ENCODE measurements at regions of chr9 and their contacts with region 1.

Region 1: GRCh38 chr9:17116400-17116837 is 18.4 kb upstream of the CNTLN start:
- DNase-seq: no peak
- H3K4me3 ChIP-seq: no peak overlapping the region
- H3K27ac ChIP-seq: no peak overlapping the region
- H3K4me1 ChIP-seq: no peaks in the 10 kb centered on the region
- H3K27me3 ChIP-seq: no peaks in the 10 kb centered on the region
- CTCF ChIP-seq: peak in 3 of 4 experiments; percentile 29 to 56 (median 47)
- POLR2A ChIP-seq: no peak

Region 2: DNA sequence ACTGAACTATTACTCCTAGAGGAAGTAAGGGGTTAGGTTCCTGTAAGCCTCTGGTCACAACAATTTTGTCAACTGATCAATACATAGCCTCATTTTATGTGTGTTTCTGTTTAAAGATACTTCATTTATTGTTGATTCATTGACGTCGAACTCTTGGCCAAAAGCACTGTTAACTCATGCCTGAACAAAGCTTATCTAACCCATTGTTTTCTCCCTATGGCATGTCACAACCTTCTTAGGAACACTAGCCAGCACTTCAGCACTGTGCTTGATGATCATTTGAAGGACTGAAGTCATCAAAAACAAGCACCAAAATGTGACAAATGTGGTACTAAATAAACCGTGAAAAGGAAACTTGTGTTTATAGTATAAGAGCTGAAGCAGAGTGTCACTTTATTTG is 31.9 kb after region 1 on chr9:
- intact Hi-C with region 1: no loop called
- DNase-seq: no peak
- H3K4me3 ChIP-seq: no peak overlapping the region
- H3K27ac ChIP-seq: no peak overlapping the region
- H3K4me1 ChIP-seq: no peaks in the 10 kb centered on the region
- H3K27me3 ChIP-seq: no peaks in the 10 kb centered on the region
- CTCF ChIP-seq: no peak
- POLR2A ChIP-seq: no peak

Region 3: GRCh38 chr9:17462869-17463464 is 346.5 kb after region 1 on chr9:
- intact Hi-C with region 1: loop called (anchors 5 kb)
- DNase-seq: peak; percentile 35
- H3K4me3 ChIP-seq: no peak overlapping the region
- H3K27ac ChIP-seq: no peak overlapping the region
- H3K4me1 ChIP-seq: no peaks in the 10 kb centered on the region
- H3K27me3 ChIP-seq: no peaks in the 10 kb centered on the region
- CTCF ChIP-seq: peak; percentile 43 to 79 (median 75)
- POLR2A ChIP-seq: no peak